A673 (cell line): ENCODE measurements at regions of chr17 and their contacts with region 1.

Region 1: GRCh38 chr17:73311781-73312641 is at the start of gene CDC42EP4:
- DNase-seq: peak; percentile 95
- H3K4me3 ChIP-seq: peak within 1 kb of the TSS; percentile 99
- H3K27ac ChIP-seq: peak within 1 kb of the TSS; percentile 91
- H3K4me1 ChIP-seq: peaks cover 25% of the 10 kb centered on the region
- H3K27me3 ChIP-seq: no peaks in the 10 kb centered on the region
- CTCF ChIP-seq: no peak
- total RNA-seq, gene CDC42EP4: 37.5 and 40.2 TPM in 2 replicates

Region 2: GRCh38 chr17:73255671-73256181 is 56.3 kb before region 1 on chr17:
- CTCF ChIA-PET with region 1: no interaction called
- POLR2A ChIA-PET with region 1: no interaction called
- intact Hi-C with region 1: no loop called
- DNase-seq: peak; percentile 53
- H3K4me3 ChIP-seq: no peak overlapping the region
- H3K27ac ChIP-seq: no peak overlapping the region
- H3K4me1 ChIP-seq: no peaks in the 10 kb centered on the region
- H3K27me3 ChIP-seq: no peaks in the 10 kb centered on the region
- CTCF ChIP-seq: peak; percentile 97

Region 3: GRCh38 chr17:73342050-73342522 is 30.1 kb after region 1 on chr17:
- CTCF ChIA-PET with region 1: interaction called, 6 read pairs
- POLR2A ChIA-PET with region 1: no interaction called
- intact Hi-C with region 1: loop called (anchors 2 kb)
- DNase-seq: peak; percentile 88
- H3K4me3 ChIP-seq: no peak overlapping the region
- H3K27ac ChIP-seq: peak overlapping the region; percentile 74
- H3K4me1 ChIP-seq: peaks cover 28% of the 10 kb centered on the region
- H3K27me3 ChIP-seq: no peaks in the 10 kb centered on the region
- CTCF ChIP-seq: no peak

Region 4: DNA sequence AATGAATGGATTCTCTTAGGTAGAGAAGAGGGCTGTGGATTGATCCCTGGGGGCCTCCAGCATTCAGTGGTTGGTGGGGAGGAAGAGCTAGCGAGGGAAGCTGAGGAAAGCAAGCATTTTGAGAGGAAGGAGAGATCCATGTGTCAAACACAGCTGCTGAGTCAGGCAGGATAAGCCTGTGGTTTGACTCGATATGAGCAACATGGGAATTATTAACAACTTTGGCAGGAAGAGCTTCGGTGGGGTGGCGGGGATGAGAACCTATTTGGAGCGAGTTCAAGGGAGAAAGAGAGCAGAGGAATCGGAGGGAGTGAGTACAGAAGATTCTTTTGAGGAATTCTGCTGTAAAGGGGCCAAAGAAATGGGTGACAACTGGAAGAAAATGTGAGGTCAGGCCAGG is 59.3 kb after region 1 on chr17:
- CTCF ChIA-PET with region 1: interaction called, 7 read pairs
- POLR2A ChIA-PET with region 1: no interaction called
- intact Hi-C with region 1: loop called (anchors 2 kb)
- DNase-seq: peak; percentile 60
- H3K4me3 ChIP-seq: no peak overlapping the region
- H3K27ac ChIP-seq: no peak overlapping the region
- H3K4me1 ChIP-seq: no peaks in the 10 kb centered on the region
- H3K27me3 ChIP-seq: no peaks in the 10 kb centered on the region
- CTCF ChIP-seq: no peak